GM12878 (cell line): ENCODE measurements at regions of chr12 and their contacts with region 1.

Region 1: DNA sequence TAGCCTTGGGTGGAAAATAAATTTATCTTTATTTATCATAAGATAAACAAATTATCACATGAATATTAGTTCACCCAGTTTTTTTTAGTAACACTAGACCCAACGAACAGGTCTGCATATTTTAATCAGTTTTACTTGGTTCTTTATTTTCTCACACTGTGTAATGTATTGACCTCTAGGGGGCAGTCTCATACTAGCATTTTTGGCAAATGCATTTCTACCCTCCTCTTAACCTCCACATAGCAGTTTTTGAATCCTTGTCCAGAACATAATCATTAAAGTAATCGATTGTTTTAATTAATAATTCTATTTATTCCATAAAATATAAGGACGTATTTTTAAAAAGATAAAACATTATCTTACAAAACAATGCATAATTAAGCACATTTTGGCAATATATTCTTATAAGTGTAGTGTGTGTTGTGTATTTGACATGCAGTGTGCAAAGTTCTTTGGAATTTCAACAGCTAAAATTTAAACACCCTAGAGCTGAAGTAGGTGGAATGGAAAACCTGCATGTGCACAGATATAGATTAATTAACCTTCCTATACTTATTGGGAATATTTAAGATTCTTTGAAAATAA is 31.6 kb upstream of the PTPRQ start:
- DNase-seq: no peak
- ATAC-seq: peak; percentile 90
- H3K4me3 ChIP-seq: no peak overlapping the region
- H3K27ac ChIP-seq: no peak overlapping the region
- H3K4me1 ChIP-seq: peaks cover 6% of the 10 kb centered on the region; the same call in 1 of the 2 replicates
- H3K27me3 ChIP-seq: no peaks in the 10 kb centered on the region
- CTCF ChIP-seq: peak; percentile 63 to 72 (median 64)
- EP300 ChIP-seq: no peak
- POLR2A ChIP-seq: no peak
- RAD21 ChIP-seq: peak; percentile 78

Region 2: GRCh38 chr12:80195074-80195726 is 217.3 kb before region 1 on chr12:
- CTCF ChIA-PET with region 1: no interaction called
- POLR2A ChIA-PET with region 1: no interaction called
- RAD21 ChIA-PET with region 1: no interaction called
- SMC1A ChIA-PET with region 1: interaction called, 3 read pairs
- in situ Hi-C with region 1: no loop called
- intact Hi-C with region 1: loop called (anchors 5 kb)
- DNase-seq: no peak
- ATAC-seq: peak; percentile 87
- H3K4me3 ChIP-seq: no peak overlapping the region
- H3K27ac ChIP-seq: no peak overlapping the region
- H3K4me1 ChIP-seq: peaks cover 3% of the 10 kb centered on the region; the same call in 1 of the 2 replicates
- H3K27me3 ChIP-seq: no peaks in the 10 kb centered on the region; a peak in 1 of 4 replicates
- CTCF ChIP-seq: peak; percentile 35 to 61 (median 44); a peak in 4 of 6 replicates
- EP300 ChIP-seq: no peak
- POLR2A ChIP-seq: no peak
- RAD21 ChIP-seq: peak; percentile 55

Region 3: DNA sequence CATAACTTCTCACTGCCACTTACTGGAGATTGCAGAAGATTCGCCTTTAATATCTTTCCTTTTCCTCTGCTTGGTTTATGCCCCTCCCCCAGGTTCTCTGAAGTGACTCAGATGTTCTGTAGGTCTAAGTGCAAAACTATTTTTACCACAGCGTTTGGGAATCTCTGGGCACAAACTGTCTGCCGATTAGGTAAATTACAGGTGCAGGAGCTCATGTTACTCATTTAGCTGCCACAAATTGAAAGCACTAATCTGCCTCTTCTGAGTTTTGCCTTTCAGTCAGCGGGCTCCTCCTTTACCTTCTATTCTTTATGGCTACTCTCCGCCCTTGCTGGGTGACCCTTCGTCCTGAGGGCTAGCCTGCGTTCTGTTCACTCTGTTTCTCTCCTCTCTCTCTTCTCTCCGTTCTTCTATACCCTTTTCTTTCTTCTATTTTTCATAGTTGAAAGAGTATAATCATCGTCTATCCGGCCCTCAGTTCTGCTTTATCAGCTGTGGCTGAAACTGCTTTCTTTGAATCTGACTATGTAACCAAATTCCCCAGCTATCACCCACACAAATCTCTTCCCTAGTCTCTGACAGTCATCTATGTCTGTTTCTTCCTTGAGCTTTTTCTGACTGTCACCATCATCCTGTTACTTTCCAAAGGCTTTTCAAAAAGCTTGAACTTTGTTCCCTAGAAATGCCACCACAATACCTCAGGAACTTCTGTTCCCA is 290.6 kb after region 1 on chr12:
- CTCF ChIA-PET with region 1: no interaction called
- POLR2A ChIA-PET with region 1: no interaction called
- RAD21 ChIA-PET with region 1: no interaction called
- SMC1A ChIA-PET with region 1: no interaction called
- in situ Hi-C with region 1: no loop called
- intact Hi-C with region 1: loop called (anchors 5 kb)
- DNase-seq: peak; percentile 23
- ATAC-seq: peak; percentile 89
- H3K4me3 ChIP-seq: peak overlapping the region; percentile 59
- H3K27ac ChIP-seq: no peak overlapping the region
- H3K4me1 ChIP-seq: peaks cover 9% of the 10 kb centered on the region; the same call in 1 of the 2 replicates
- H3K27me3 ChIP-seq: peaks cover 2 to 4% of the 10 kb centered on the region in 2 experiments; a peak in 2 of 4 replicates
- CTCF ChIP-seq: no peak
- EP300 ChIP-seq: no peak
- POLR2A ChIP-seq: no peak
- RAD21 ChIP-seq: no peak

Region 4: DNA sequence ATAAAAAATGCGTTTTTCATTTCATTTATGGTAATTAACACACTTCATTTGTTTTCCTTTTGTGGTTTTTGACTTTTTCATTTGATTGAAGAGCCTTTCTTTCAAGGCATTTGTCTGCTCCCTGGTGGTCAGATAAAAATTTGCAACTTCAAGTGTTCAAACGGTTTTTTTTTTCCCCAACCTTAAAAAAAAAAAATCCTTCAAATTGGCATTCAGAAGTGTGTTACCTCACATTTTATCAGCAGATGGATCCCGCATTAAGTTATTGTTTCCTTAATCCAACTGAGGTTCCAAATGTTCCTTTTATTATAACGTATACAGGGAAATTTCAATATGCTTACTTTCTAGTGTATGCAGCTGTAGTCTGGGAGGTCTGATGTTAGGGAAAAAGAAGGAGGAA is 351.4 kb after region 1 on chr12:
- CTCF ChIA-PET with region 1: no interaction called
- POLR2A ChIA-PET with region 1: no interaction called
- RAD21 ChIA-PET with region 1: no interaction called
- SMC1A ChIA-PET with region 1: interaction called, 4 read pairs
- in situ Hi-C with region 1: no loop called
- intact Hi-C with region 1: loop called (anchors 1 kb)
- DNase-seq: no peak
- ATAC-seq: peak; percentile 21; the same call in 2 of the 3 replicates
- H3K4me3 ChIP-seq: no peak overlapping the region
- H3K27ac ChIP-seq: no peak overlapping the region
- H3K4me1 ChIP-seq: no peaks in the 10 kb centered on the region
- H3K27me3 ChIP-seq: no peaks in the 10 kb centered on the region
- CTCF ChIP-seq: peak; percentile 36 to 51 (median 50); a peak in 5 of 6 replicates
- EP300 ChIP-seq: no peak
- POLR2A ChIP-seq: no peak
- RAD21 ChIP-seq: peak; percentile 86

Region 5: GRCh38 chr12:81128930-81129554 is 716.6 kb after region 1 on chr12:
- CTCF ChIA-PET with region 1: no interaction called
- POLR2A ChIA-PET with region 1: no interaction called
- RAD21 ChIA-PET with region 1: no interaction called
- SMC1A ChIA-PET with region 1: no interaction called
- in situ Hi-C with region 1: no loop called
- intact Hi-C with region 1: loop called (anchors 1 kb)
- DNase-seq: peak; percentile 5
- ATAC-seq: peak; percentile 90
- H3K4me3 ChIP-seq: no peak overlapping the region
- H3K27ac ChIP-seq: no peak overlapping the region
- H3K4me1 ChIP-seq: no peaks in the 10 kb centered on the region
- H3K27me3 ChIP-seq: no peaks in the 10 kb centered on the region
- CTCF ChIP-seq: peak; percentile 66 to 81 (median 80)
- EP300 ChIP-seq: no peak
- POLR2A ChIP-seq: no peak
- RAD21 ChIP-seq: peak; percentile 60

Region 6: DNA sequence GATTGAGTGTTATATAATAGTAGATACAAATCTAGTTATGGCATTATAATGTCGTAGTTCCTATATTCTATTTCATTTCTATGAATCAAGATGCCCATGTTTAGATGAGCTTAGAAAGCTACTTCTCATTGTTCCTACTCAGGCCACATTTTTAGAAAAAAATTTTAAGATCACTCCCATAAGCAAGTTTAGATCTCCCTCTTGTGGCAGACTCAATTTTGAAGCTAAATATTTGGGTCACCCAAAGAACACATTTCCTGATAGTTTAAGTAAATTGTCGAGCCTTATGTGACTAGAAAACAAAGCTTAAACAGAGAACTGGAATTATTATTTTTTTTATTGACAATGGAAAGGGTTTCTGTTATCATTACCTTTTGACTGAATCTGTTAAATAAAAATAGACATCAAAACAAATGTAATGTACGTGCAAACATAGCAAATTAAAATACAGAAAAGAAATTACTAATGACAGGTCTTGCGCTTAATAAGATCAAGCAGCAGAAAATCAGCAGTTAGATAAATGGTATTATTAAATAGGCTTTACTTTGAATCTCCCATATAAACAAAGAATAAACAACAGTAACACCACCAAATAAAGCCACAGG is 845.6 kb after region 1 on chr12:
- CTCF ChIA-PET with region 1: interaction called, 3 read pairs
- POLR2A ChIA-PET with region 1: no interaction called
- RAD21 ChIA-PET with region 1: no interaction called
- SMC1A ChIA-PET with region 1: no interaction called
- in situ Hi-C with region 1: no loop called
- intact Hi-C with region 1: loop called (anchors 2 kb)
- DNase-seq: no peak
- ATAC-seq: peak; percentile 52; the same call in 1 of the 3 replicates
- H3K4me3 ChIP-seq: no peak overlapping the region
- H3K27ac ChIP-seq: no peak overlapping the region
- H3K4me1 ChIP-seq: no peaks in the 10 kb centered on the region
- H3K27me3 ChIP-seq: no peaks in the 10 kb centered on the region
- CTCF ChIP-seq: peak in 1 of 3 experiments; percentile 38; a peak in 1 of 6 replicates
- EP300 ChIP-seq: no peak
- POLR2A ChIP-seq: no peak
- RAD21 ChIP-seq: peak; percentile 54

Region 7: DNA sequence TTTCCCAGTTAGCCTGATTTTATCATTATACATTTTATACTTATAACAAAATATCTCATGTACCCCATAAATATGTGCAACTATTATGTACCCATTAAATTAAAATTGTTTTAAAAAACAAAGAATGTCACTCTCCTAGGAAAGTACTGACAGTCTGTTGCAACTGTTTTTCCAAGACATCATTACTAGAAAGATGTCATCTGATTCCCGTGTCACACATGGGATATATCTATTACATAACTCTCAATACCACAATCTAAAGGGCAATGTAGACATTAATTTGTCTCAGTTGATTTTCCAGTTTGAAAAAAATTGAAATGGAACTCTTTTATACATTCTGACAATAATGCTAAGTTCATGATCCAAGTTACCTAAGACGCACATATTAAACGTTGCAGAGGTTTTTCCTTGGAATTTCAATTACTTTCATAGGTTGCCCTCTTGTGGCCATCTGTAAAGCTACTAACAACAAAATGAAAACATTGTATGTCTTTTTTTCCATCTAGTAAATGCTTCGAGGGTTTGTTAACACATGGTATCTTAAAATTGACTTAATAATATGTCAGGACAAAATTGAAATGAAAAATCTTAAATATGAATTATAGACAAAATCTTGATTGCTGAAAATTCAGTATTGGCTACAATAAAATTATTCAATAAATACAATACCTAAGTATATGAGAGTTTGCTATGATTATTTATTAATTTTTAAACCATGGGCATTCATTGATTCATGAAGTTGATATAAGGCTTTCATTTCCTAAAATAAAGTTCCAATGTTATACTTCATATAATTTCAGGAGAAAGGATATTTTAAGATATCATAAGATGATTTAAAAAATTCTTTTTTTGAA is 1215.1 kb after region 1 on chr12:
- CTCF ChIA-PET with region 1: no interaction called
- POLR2A ChIA-PET with region 1: no interaction called
- RAD21 ChIA-PET with region 1: no interaction called
- SMC1A ChIA-PET with region 1: no interaction called
- in situ Hi-C with region 1: no loop called
- intact Hi-C with region 1: loop called (anchors 10 kb)
- DNase-seq: no peak
- ATAC-seq: peak; percentile 45; the same call in 1 of the 3 replicates
- H3K4me3 ChIP-seq: no peak overlapping the region
- H3K27ac ChIP-seq: no peak overlapping the region
- H3K4me1 ChIP-seq: no peaks in the 10 kb centered on the region
- H3K27me3 ChIP-seq: no peaks in the 10 kb centered on the region
- CTCF ChIP-seq: peak; percentile 41 to 47 (median 41); a peak in 5 of 6 replicates
- EP300 ChIP-seq: no peak
- POLR2A ChIP-seq: no peak
- RAD21 ChIP-seq: peak; percentile 47; the same call in 1 of the 2 replicates